Naive thymus-derived CD4-positive, alpha-beta T cell (primary cell): ENCODE measurements at regions of chr1 and their contacts with region 1.

Region 1: DNA sequence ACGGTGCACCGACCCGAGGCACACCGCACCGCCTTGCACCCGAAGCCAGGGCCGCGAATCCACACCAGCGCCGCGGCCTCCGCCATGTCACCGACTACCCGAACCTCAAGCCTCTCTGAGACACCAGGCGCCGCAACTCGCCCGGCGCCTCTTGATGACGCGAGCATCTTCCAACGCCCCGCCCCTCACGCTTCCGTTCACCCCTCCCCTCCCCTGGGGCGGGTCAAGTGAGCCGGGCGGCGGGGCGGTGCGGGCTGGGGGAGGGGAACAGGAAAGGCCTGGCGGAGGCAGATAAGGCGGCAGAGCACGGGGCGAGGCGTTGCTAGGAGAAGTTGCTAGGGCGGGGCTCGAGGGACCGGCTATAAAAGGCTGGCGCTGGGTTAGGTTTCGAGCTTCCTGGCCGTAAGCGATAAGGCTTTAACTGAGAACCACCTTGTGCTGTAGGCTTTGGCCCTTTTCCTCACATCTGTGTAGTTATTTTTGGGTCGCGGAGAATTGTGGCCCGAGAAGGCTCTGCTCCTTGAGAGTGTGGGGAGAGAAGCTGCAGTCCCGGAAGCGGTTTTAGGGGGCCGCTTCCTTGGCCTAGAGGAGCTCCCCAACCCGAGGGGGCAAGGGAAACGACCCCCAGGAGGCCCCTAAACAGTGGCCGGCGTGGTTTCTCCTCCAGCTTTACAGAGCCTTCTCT is at the start of gene SDE2:
- DNase-seq: peak; percentile 98 to 100 (median 100)
- ATAC-seq: peak; percentile 93
- H3K4me3 ChIP-seq: peak within 1 kb of the TSS; percentile 84
- H3K4me3 Mint-ChIP-seq: peak within 1 kb of the TSS; percentile 89 to 100 (median 100)
- H3K27ac ChIP-seq: peak within 1 kb of the TSS; percentile 98
- H3K27ac Mint-ChIP-seq: peak within 1 kb of the TSS; percentile 95 to 100 (median 100)
- H3K4me1 ChIP-seq: peaks cover 51 to 71% of the 10 kb centered on the region in 2 donors
- H3K4me1 Mint-ChIP-seq: peaks cover 47 to 96% (median 79%) of the 10 kb centered on the region in 7 donors
- H3K27me3 ChIP-seq: no peaks in the 10 kb centered on the region
- H3K27me3 Mint-ChIP-seq: no peaks in the 10 kb centered on the region
- total RNA-seq, gene SDE2: 20.4 to 36.3 (median 20.8) TPM

Region 2: GRCh38 chr1:225441314-225442122 is 557.9 kb before region 1 on chr1:
- CTCF ChIA-PET with region 1: no interaction called
- POLR2A ChIA-PET with region 1: interaction called, 19 read pairs
- intact Hi-C with region 1: loop called (anchors 1 kb)
- DNase-seq: peak in 3 of 9 donors; percentile 15 to 16 (median 16)
- ATAC-seq: no peak
- H3K4me3 ChIP-seq: no peak overlapping the region
- H3K4me3 Mint-ChIP-seq: peak overlapping the region; percentile 25 to 77 (median 63)
- H3K27ac ChIP-seq: peak overlapping the region; percentile 49
- H3K27ac Mint-ChIP-seq: peak overlapping the region; percentile 76 to 94 (median 91)
- H3K4me1 ChIP-seq: peaks cover 18 to 50% of the 10 kb centered on the region in 2 donors
- H3K4me1 Mint-ChIP-seq: peaks cover 47 to 70% (median 62%) of the 10 kb centered on the region in 7 donors
- H3K27me3 ChIP-seq: no peaks in the 10 kb centered on the region
- H3K27me3 Mint-ChIP-seq: peaks cover 0 to 2% (median 0%) of the 10 kb centered on the region in 5 donors

Region 3: GRCh38 chr1:225881969-225882693 is 117.2 kb before region 1 on chr1 and contains the start of gene TMEM63A:
- CTCF ChIA-PET with region 1: no interaction called
- POLR2A ChIA-PET with region 1: interaction called, 14 read pairs
- intact Hi-C with region 1: loop called (anchors 1 to 5 kb)
- DNase-seq: peak; percentile 83 to 89 (median 87)
- ATAC-seq: peak; percentile 84
- H3K4me3 ChIP-seq: peak within 1 kb of the TSS; percentile 80
- H3K4me3 Mint-ChIP-seq: peak within 1 kb of the TSS; percentile 89 to 99 (median 97)
- H3K27ac ChIP-seq: peak within 1 kb of the TSS; percentile 90
- H3K27ac Mint-ChIP-seq: peak within 1 kb of the TSS; percentile 91 to 98 (median 96)
- H3K4me1 ChIP-seq: peaks cover 41% of the 10 kb centered on the region in 2 donors
- H3K4me1 Mint-ChIP-seq: peaks cover 37 to 50% (median 48%) of the 10 kb centered on the region in 7 donors
- H3K27me3 ChIP-seq: no peaks in the 10 kb centered on the region
- H3K27me3 Mint-ChIP-seq: peaks cover 0 to 21% (median 0%) of the 10 kb centered on the region in 5 donors
- total RNA-seq, gene TMEM63A: 189 to 611 (median 383) TPM

Region 4: GRCh38 chr1:226019572-226019971 is 20.2 kb after region 1 on chr1:
- CTCF ChIA-PET with region 1: no interaction called
- POLR2A ChIA-PET with region 1: interaction called, 15 read pairs
- intact Hi-C with region 1: no loop called
- DNase-seq: no peak
- ATAC-seq: no peak
- H3K4me3 ChIP-seq: no peak overlapping the region
- H3K4me3 Mint-ChIP-seq: no peak overlapping the region
- H3K27ac ChIP-seq: no peak overlapping the region
- H3K27ac Mint-ChIP-seq: no peak overlapping the region
- H3K4me1 ChIP-seq: no peaks in the 10 kb centered on the region
- H3K4me1 Mint-ChIP-seq: peaks cover 0 to 6% (median 3%) of the 10 kb centered on the region in 7 donors
- H3K27me3 ChIP-seq: no peaks in the 10 kb centered on the region
- H3K27me3 Mint-ChIP-seq: peaks cover 0 to 10% (median 0%) of the 10 kb centered on the region in 5 donors

Region 5: GRCh38 chr1:226083302-226084101 is 84.1 kb after region 1 on chr1:
- CTCF ChIA-PET with region 1: interaction called, 3 read pairs
- POLR2A ChIA-PET with region 1: interaction called, 18 read pairs
- intact Hi-C with region 1: loop called in 1 of 2 experiments (anchors 1 kb)
- DNase-seq: peak; percentile 79 to 98 (median 87)
- ATAC-seq: peak; percentile 98
- H3K4me3 ChIP-seq: peak overlapping the region; percentile 77
- H3K4me3 Mint-ChIP-seq: peak overlapping the region; percentile 78 to 94 (median 91)
- H3K27ac ChIP-seq: peak overlapping the region; percentile 65
- H3K27ac Mint-ChIP-seq: peak overlapping the region; percentile 25 to 93 (median 75)
- H3K4me1 ChIP-seq: peaks cover 5 to 8% of the 10 kb centered on the region in 2 donors
- H3K4me1 Mint-ChIP-seq: peaks cover 5 to 12% (median 8%) of the 10 kb centered on the region in 7 donors
- H3K27me3 ChIP-seq: no peaks in the 10 kb centered on the region
- H3K27me3 Mint-ChIP-seq: peaks cover 0 to 10% (median 0%) of the 10 kb centered on the region in 5 donors

Region 6: DNA sequence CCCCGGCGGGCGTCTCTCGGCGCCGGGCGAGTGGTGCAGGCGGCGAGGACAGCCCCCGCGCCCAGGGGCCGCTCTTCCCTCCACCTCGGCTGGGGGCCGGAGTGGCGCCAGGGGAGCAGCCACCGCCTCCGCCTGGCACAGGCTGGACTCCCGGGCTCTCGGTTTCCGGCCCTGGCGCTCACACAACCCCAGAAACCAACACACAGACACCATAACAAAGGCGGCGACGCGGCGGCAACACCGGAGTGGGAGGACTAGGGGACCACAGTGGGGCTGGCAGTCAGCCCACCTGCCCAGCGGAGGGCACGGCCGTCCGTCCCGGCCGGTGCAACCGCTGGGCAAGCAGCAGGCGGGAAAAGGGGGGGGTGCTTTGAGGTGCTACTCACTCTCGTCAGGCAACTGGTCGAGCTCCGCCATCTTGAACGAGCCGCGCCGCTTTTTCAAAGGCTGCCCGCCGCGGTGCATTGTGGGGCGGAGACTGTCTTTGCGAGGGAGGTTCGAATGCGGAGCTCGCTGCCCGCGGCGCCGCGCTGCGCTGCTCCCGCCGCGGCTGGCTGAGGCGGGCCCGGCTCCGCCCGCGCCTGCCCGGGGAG is 309.4 kb after region 1 on chr1 and contains the start of gene LIN9:
- CTCF ChIA-PET with region 1: no interaction called
- POLR2A ChIA-PET with region 1: interaction called, 3 read pairs
- intact Hi-C with region 1: loop called in 1 of 2 experiments (anchors 10 kb)
- DNase-seq: peak; percentile 83 to 94 (median 88)
- ATAC-seq: peak; percentile 97
- H3K4me3 ChIP-seq: peak within 1 kb of the TSS; percentile 99
- H3K4me3 Mint-ChIP-seq: peak within 1 kb of the TSS; percentile 88 to 95 (median 92)
- H3K27ac ChIP-seq: peak within 1 kb of the TSS; percentile 76
- H3K27ac Mint-ChIP-seq: peak within 1 kb of the TSS; percentile 34 to 97 (median 85)
- H3K4me1 ChIP-seq: peaks cover 5% of the 10 kb centered on the region in 2 donors
- H3K4me1 Mint-ChIP-seq: peaks cover 14 to 37% (median 22%) of the 10 kb centered on the region in 7 donors
- H3K27me3 ChIP-seq: peaks cover 0 to 4% of the 10 kb centered on the region in 2 donors
- H3K27me3 Mint-ChIP-seq: peaks cover 5 to 19% (median 14%) of the 10 kb centered on the region in 5 donors
- total RNA-seq, gene LIN9: 2.0 to 8.0 (median 5.0) TPM

Region 7: DNA sequence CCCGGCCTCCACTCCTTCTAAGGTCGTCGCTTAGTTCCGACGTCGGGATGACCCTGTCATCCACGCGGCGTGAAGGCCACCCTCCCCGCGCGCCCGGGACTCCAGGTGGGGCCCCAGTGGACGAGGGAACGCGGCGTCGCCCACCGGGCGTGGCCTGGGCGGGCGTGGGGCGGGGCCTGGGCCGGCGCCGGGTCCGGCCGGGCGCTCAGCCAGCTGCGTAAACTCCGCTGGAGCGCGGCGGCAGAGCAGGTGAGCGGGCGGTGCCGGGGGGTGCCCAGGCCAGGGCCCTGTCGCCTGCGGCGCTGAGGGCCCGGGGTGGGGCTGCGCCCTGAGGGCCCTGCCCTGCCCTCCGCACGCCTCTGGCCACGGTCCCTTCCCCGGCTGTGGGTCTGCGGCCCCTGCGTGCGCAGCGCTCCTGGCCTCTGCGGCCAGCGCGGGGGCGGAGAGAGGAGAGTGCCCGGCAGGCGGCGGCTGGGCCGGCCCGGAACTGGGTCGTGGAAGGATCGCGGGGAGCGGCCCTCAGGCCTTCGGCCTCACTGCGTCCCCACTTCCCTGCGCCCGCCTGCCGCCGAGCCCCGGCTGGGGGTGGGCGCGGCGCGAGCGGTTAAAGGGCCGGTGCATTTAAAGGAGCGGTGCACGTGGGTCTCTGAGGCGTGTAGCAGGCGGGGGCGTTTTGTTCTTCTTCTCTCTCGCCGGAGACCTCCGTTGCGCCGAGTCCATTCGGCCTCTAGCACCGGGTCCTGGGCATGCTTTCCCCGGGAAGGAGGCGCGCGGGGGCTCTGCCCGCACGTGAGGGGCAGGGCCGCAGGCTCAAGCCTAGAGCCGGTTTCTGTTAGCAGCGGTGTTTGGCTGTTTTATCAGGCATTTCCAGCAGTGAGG is 871.3 kb after region 1 on chr1 and contains the start of gene PSEN2:
- CTCF ChIA-PET with region 1: no interaction called
- POLR2A ChIA-PET with region 1: no interaction called
- intact Hi-C with region 1: no loop called
- DNase-seq: peak in 6 of 9 donors; percentile 17 to 77 (median 34)
- ATAC-seq: peak; percentile 87
- H3K4me3 ChIP-seq: peak within 1 kb of the TSS; percentile 57
- H3K4me3 Mint-ChIP-seq: peak within 1 kb of the TSS; percentile 73 to 88 (median 84)
- H3K27ac ChIP-seq: no peak within 1 kb of the TSS
- H3K27ac Mint-ChIP-seq: peak within 1 kb of the TSS in 2 of 9 donors; percentile 10 to 48
- H3K4me1 ChIP-seq: peaks cover 0 to 3% of the 10 kb centered on the region in 2 donors
- H3K4me1 Mint-ChIP-seq: peaks cover 3 to 21% (median 11%) of the 10 kb centered on the region in 7 donors
- H3K27me3 ChIP-seq: no peaks in the 10 kb centered on the region
- H3K27me3 Mint-ChIP-seq: peaks cover 7 to 27% (median 10%) of the 10 kb centered on the region in 5 donors
- total RNA-seq, gene PSEN2: 0.70 to 10.3 (median 3.7) TPM

Region 8: DNA sequence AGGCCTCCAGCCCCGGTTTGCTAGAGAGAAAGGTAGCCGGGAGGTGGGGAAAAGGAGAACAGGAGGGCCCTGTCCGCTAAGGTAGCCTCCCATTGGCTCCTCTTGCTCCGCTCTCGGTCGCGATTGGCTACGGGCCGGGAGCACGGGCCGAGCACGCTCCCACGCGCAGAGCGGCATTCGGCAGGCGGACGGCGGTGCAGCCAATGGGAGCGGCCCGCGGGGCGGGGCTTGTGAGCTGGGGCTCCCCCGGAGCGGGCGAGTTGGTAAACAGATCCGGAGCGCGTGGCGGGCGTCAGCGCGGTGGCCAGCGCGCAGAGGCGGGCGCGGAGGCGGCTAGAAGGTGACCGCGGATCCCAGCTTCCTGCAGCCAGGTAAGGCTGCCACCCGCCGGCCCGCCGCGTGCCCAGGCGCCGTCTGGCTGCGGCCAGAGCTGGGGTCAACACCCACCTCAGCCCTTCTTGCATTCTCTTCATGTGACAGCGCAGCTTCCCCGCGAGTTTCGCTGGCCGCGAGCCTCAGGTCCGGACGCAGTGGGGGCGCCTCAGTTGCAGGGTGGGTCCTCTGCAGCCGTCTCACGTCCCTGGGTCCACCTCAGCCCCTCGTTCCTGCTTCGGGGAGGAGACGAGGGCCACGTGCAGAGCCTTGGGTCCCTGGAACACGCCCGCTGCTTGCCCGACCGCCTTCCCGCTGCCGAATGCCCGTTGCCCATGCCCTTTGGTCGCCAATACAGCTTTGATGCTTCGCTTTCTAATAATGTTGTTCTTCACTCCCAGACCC is 940.8 kb after region 1 on chr1 and contains the start of gene COQ8A:
- CTCF ChIA-PET with region 1: no interaction called
- POLR2A ChIA-PET with region 1: interaction called, 3 read pairs
- intact Hi-C with region 1: loop called (anchors 1 to 5 kb)
- DNase-seq: peak in 8 of 9 donors; percentile 99 to 100 (median 100)
- ATAC-seq: peak; percentile 95
- H3K4me3 ChIP-seq: peak within 1 kb of the TSS; percentile 84
- H3K4me3 Mint-ChIP-seq: peak within 1 kb of the TSS; percentile 85 to 94 (median 92)
- H3K27ac ChIP-seq: peak within 1 kb of the TSS; percentile 87
- H3K27ac Mint-ChIP-seq: peak within 1 kb of the TSS; percentile 94 to 98 (median 97)
- H3K4me1 ChIP-seq: peaks cover 15 to 34% of the 10 kb centered on the region in 2 donors
- H3K4me1 Mint-ChIP-seq: peaks cover 43 to 67% (median 50%) of the 10 kb centered on the region in 7 donors
- H3K27me3 ChIP-seq: no peaks in the 10 kb centered on the region
- H3K27me3 Mint-ChIP-seq: no peaks in the 10 kb centered on the region
- total RNA-seq, gene COQ8A: 34.1 to 83.4 (median 67.8) TPM